ENCODE measurements at regions of chr5 and their contacts with region 1.

Region 1: GRCh38 chr5:39074016-39074886 is at the start of gene RICTOR:
- DNase-seq: peak; percentile 77 to 94 (median 91)
- H3K4me3 ChIP-seq: peak within 1 kb of the TSS; percentile 65 to 97 (median 88)
- H3K27ac ChIP-seq: peak within 1 kb of the TSS; percentile 95 to 100 (median 99)
- H3K27me3 ChIP-seq: no peaks in the 10 kb centered on the region
- CTCF ChIP-seq: peak in 6 of 56 donors; percentile 2 to 41 (median 13)
- total RNA-seq, gene RICTOR: 59.2 to 100 (median 77.8) TPM

Region 2: GRCh38 chr5:39001683-39002082 is 72.6 kb before region 1 on chr5:
- intact Hi-C with region 1: loop called in 1 of 2 experiments (anchors 5 kb)
- DNase-seq: no peak
- H3K4me3 ChIP-seq: no peak overlapping the region
- H3K27ac ChIP-seq: peak overlapping the region in 4 of 59 donors; percentile 1 to 9 (median 4)
- H3K27me3 ChIP-seq: no peaks in the 10 kb centered on the region
- CTCF ChIP-seq: no peak

Region 3: GRCh38 chr5:39138892-39139291 is 64.6 kb after region 1 on chr5:
- intact Hi-C with region 1: loop called in 1 of 2 experiments (anchors 10 kb)
- DNase-seq: no peak
- H3K4me3 ChIP-seq: no peak overlapping the region
- H3K27ac ChIP-seq: no peak overlapping the region
- H3K27me3 ChIP-seq: no peaks in the 10 kb centered on the region
- CTCF ChIP-seq: no peak

Region 4: GRCh38 chr5:39148983-39149534 is 74.8 kb after region 1 on chr5:
- intact Hi-C with region 1: loop called in 1 of 2 experiments (anchors 5 kb)
- DNase-seq: no peak
- H3K4me3 ChIP-seq: no peak overlapping the region
- H3K27ac ChIP-seq: peak overlapping the region in 33 of 59 donors; percentile 1 to 78 (median 39)
- H3K27me3 ChIP-seq: peaks cover 0 to 5% (median 0%) of the 10 kb centered on the region in 45 donors
- CTCF ChIP-seq: peak in 55 of 56 donors; percentile 39 to 79 (median 59)